ENCODE measurements at regions of chr19 and their contacts with region 1.

Region 1: DNA sequence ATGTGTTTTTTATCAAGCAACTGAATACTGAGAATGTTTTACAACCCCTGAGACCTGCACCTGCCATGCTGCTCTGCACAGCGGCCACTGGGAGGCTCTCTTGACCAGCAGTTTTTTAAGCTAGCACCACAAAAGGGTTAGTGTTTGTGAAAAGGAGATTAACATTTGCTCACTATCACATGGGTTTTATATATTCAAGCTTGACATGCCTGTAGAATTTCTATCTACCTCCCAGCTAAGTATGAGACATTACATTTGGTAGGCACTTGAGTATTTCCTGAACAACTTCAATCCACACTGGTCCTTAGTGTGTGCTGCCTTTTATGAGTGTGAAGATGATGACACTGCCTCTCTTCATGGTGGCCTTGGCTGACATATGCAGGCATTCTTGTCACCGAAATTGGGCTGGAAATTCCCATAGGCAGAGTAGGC is 1238.9 kb downstream of the UQCRFS1 start:
- DNase-seq: peak in 9 of 10 donors; percentile 22 to 68 (median 52)
- H3K4me3 ChIP-seq: no peak overlapping the region
- H3K27ac ChIP-seq: no peak overlapping the region
- H3K27me3 ChIP-seq: peaks cover 0 to 3% (median 0%) of the 10 kb centered on the region in 45 donors
- CTCF ChIP-seq: peak; percentile 31 to 93 (median 80)

Region 2: GRCh38 chr19:28242297-28242927 is 268.3 kb after region 1 on chr19:
- intact Hi-C with region 1: loop called (anchors 10 kb)
- DNase-seq: no peak
- H3K4me3 ChIP-seq: no peak overlapping the region
- H3K27ac ChIP-seq: no peak overlapping the region
- H3K27me3 ChIP-seq: no peaks in the 10 kb centered on the region
- CTCF ChIP-seq: peak in 54 of 56 donors; percentile 45 to 79 (median 67)

Region 3: GRCh38 chr19:28324275-28325060 is 350.4 kb after region 1 on chr19:
- intact Hi-C with region 1: loop called (anchors 2 to 5 kb)
- DNase-seq: no peak
- H3K4me3 ChIP-seq: no peak overlapping the region
- H3K27ac ChIP-seq: no peak overlapping the region
- H3K27me3 ChIP-seq: peaks cover 0 to 3% (median 0%) of the 10 kb centered on the region in 45 donors
- CTCF ChIP-seq: peak in 2 of 56 donors; percentile 5 to 8

Region 4: DNA sequence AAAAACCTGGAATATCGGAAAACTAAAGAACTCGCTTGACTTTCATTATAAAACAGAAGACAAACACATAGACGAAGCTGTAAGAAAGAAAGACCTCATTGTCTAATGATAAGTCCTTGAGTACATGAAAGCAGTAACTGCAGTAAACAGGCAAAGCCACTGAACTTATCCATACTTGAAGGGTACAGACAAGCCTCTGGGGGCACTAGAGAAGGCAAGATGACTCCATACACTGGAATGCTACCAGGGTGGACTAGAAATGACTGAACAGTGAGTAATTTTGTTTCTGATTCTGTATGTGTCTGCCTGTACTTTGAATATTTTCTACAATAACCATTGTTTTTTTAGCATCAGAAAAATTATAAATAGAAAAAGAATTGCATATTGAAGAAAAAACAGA is 730.9 kb after region 1 on chr19:
- intact Hi-C with region 1: loop called in 1 of 2 experiments (anchors 5 kb)
- DNase-seq: no peak
- H3K4me3 ChIP-seq: no peak overlapping the region
- H3K27ac ChIP-seq: no peak overlapping the region
- H3K27me3 ChIP-seq: no peaks in the 10 kb centered on the region
- CTCF ChIP-seq: peak in 6 of 56 donors; percentile 7 to 25 (median 18)